ENCODE measurements at regions of chr11 and their contacts with region 1.

Region 1: GRCh38 chr11:12599408-12600143 is 74.6 kb upstream of the TEAD1 start:
- DNase-seq: peak; percentile 58
- H3K4me3 Mint-ChIP-seq: no peak overlapping the region
- H3K27ac Mint-ChIP-seq: no peak overlapping the region
- H3K4me1 Mint-ChIP-seq: peaks cover 14% of the 10 kb centered on the region
- H3K27me3 Mint-ChIP-seq: peaks cover 18% of the 10 kb centered on the region

Region 2: GRCh38 chr11:12646478-12646877 is 46.9 kb after region 1 on chr11:
- CTCF ChIA-PET with region 1: no interaction called
- intact Hi-C with region 1: no loop called
- DNase-seq: no peak
- H3K4me3 Mint-ChIP-seq: no peak overlapping the region
- H3K27ac Mint-ChIP-seq: no peak overlapping the region
- H3K4me1 Mint-ChIP-seq: no peaks in the 10 kb centered on the region
- H3K27me3 Mint-ChIP-seq: no peaks in the 10 kb centered on the region

Region 3: DNA sequence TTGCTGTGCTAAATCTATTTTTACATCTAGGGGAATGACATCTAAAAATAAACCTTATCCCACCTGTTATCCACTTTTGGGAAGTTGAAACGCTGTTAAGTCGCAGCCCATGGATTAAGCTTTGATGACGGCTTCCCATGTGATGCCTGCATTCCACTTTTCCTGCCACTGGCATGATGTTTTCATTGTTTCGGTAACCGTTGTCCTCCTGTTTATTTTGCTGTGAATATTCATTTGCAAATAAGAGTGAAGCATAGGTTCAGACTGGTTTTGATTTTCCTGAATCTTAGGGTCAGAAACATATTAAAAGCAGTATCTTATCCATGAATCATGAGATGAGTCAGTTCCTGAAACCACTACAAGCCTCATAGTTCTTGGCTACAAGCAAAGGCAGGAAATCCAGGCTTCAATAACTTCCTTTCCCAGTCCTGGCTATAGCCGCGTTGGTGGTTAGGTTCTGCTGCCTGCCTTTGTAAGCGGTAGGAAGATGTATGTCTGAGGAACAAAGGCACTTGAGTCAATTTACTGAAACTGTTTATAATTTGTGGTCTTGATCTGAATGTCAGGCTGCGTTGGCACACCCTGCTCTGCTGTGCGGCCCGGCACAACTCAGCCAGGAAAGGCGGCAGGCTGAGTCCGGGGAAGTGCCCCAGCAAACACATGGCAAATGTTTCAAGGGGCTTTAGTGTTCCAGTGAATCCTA is 94.1 kb after region 1 on chr11:
- CTCF ChIA-PET with region 1: no interaction called
- intact Hi-C with region 1: no loop called
- DNase-seq: peak; percentile 57
- H3K4me3 Mint-ChIP-seq: no peak overlapping the region
- H3K27ac Mint-ChIP-seq: no peak overlapping the region
- H3K4me1 Mint-ChIP-seq: peaks cover 21% of the 10 kb centered on the region
- H3K27me3 Mint-ChIP-seq: peaks cover 73% of the 10 kb centered on the region

Region 4: DNA sequence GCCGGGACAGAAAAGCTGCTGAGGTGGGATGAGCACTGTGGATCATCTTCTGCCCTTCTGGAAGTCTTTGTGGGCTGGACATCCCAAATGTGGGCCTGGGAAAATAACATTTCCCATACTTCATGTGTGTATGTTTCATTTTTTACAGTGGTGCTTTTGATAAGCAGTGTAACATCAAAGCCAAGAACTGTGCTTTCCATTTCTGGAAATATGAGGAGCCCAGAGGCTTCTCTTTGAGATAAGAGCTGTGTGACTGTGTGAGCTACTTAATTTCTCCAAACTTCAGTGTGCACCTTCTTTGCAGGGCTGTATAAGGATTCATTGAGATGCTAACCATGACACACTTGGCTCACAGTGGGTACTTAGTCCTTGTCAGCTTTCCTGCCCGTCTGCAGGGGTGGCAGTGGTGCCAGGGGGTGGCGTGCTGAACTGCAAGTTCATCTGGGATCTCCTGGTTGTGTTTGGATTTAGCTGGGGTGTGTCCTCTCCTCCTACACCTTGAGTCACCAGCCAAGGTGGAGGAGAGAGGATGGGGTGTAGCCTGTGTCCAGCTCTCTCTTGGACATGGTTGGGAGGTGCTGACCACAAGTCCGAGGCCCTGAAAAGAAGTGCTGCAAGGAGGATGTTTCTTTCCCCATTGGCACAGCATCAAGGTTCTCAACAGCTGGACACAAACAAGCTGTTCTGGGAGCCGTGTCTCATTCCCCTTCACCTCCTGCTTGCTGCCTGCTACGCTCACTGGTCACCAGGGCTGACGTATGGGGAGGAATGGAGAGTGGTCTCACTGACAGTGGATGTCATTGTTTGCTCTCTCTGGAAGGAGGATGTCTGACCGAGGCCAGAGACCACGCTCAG is 214.0 kb after region 1 on chr11:
- CTCF ChIA-PET with region 1: no interaction called
- intact Hi-C with region 1: loop called (anchors 5 kb)
- DNase-seq: no peak
- H3K4me3 Mint-ChIP-seq: no peak overlapping the region
- H3K27ac Mint-ChIP-seq: no peak overlapping the region
- H3K4me1 Mint-ChIP-seq: peaks cover 4% of the 10 kb centered on the region
- H3K27me3 Mint-ChIP-seq: peaks cover 50% of the 10 kb centered on the region

Measured in activated naive CD4-positive, alpha-beta T cell treated with anti-CD3 and anti-CD28 coated beads for 36 hours (primary cell).